ENCODE measurements at regions of chr9 and their contacts with region 1.

Region 1: GRCh38 chr9:131590908-131591844 is 45.9 kb downstream of the PRRT1B start:
- DNase-seq: peak; percentile 91

Region 2: DNA sequence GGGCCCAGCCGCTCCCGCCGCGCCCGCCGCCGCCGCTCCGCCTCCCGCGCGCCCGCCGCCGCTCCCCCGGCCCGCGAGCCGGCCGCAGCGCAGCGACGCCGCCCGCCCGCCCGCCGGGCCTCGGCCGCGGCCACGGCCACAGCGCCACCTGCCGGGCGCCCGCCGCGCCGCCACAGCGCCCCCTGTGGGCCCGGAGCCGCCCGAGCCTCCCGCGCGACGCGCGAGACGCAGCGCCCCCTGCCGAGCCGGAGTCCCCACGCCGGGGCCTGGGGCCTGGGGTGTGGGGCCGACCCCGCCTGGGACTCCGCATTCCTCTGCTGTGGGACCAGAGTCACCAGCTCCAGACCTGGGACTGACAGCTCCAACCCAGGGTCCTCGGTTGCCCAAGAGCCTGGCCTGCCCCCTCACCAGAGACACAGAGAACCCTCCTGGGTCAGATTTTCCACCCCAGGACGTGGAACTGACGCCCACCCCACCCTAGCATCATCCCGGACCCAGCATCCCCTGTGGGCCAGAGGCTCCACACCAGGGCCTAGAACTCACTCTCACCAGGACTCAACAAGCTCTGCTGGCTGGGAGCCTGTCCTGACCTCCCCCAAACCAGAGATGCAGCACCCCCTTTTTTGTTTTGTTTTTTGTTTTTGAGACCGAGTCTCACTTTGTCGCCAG is 148.9 kb after region 1 on chr9 and contains the start of gene RAPGEF1:
- intact Hi-C with region 1: loop called (anchors 1 kb)
- DNase-seq: peak; percentile 93
- total RNA-seq, gene RAPGEF1: 115 TPM